Heart left ventricle (tissue), 16 donors: ENCODE measurements at regions of chr2 and their contacts with region 1.

Region 1: DNA sequence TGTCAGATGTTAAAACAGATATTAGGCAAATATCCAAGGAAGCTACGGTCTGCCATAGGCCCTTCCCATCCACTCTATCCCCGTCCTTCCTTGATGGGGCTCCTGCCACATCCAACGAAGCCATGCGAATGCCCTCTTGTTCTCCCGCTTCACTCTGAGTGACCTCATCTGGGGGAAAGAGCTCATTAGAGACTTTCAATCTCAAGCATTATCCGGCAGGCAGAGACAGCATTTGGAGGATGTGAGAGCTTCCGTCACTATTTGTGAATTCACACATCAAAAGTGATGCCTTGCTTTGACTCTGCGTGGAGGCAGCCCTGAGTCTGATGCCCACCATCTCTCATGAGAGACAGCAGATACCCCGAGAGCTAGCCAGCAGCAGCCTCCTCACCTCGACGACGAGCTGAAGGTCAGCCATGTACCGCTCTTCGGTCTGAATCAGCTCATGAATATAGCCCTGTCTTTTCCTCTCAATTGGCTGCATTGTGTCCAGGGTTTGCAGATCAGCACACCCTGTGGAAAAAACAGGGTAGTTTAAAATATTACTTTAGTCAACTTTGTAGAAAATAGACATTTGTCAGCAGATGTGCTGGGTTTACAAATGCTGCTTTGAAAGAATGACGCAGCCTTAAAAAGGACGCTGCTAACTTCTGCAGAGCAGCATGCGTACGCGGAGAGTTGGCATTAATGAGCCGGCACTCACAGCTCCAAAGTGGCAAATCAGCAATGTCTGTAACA is 45.9 kb downstream of the FAM228A start:
- DNase-seq: no peak
- ATAC-seq: no peak
- H3K4me3 ChIP-seq: no peak overlapping the region
- H3K27ac ChIP-seq: no peak overlapping the region
- H3K4me1 ChIP-seq: no peaks in the 10 kb centered on the region
- H3K27me3 ChIP-seq: no peaks in the 10 kb centered on the region
- CTCF ChIP-seq: no peak
- POLR2A ChIP-seq: no peak

Region 2: DNA sequence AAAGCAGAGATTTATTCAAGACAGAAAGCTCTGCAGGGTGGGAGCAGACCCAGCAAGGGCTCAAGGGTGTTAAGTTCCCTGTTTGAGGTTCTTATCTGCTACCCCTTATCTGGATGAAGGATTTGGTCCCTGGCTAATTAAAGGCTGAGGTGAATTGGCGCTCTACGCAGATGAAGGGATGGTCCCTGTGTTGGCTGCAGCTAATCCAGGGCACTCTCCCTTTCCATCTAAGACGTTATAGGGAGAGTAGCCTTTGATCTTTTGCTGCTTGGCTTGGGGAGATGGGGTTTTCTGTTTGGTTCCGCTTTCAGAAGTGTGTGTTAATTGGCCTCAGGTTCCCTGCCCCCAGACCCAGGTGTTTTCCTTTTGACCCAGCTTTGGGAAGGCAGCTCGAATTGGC is 28.9 kb before region 1 on chr2:
- intact Hi-C with region 1: no loop called
- DNase-seq: no peak
- ATAC-seq: no peak
- H3K4me3 ChIP-seq: no peak overlapping the region
- H3K27ac ChIP-seq: no peak overlapping the region
- H3K4me1 ChIP-seq: no peaks in the 10 kb centered on the region
- H3K27me3 ChIP-seq: no peaks in the 10 kb centered on the region
- CTCF ChIP-seq: no peak
- POLR2A ChIP-seq: no peak

Region 3: GRCh38 chr2:24754985-24755705 is 534.4 kb after region 1 on chr2:
- intact Hi-C with region 1: loop called in 1 of 10 experiments (anchors 5 kb)
- DNase-seq: no peak
- ATAC-seq: no peak
- H3K4me3 ChIP-seq: no peak overlapping the region
- H3K27ac ChIP-seq: no peak overlapping the region
- H3K4me1 ChIP-seq: no peaks in the 10 kb centered on the region
- H3K27me3 ChIP-seq: no peaks in the 10 kb centered on the region
- CTCF ChIP-seq: no peak
- POLR2A ChIP-seq: no peak

Region 4: DNA sequence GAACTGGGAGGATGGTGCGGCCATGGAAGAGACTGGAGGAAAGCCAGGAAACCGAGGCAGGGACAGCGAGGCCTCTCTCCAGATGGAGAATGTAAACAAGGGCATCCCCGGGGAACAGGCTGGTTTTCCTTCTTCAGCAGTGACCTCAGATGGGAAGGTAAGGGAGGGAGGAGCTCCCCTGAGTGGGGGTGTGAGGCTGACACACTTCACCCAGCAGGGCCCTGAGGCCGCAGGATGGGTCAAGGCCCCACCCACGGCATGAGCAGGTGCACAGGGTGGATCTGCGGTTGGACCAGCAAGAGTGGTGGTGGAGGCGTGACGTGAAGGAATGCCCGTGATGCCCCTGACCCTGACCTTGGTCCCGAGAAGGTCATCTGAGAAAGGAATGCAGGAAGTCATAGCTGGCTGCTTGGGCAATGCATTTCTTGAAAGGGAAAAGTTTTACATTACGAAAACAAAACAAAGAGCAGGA is 651.2 kb after region 1 on chr2:
- intact Hi-C with region 1: no loop called
- DNase-seq: peak in 2 of 5 donors; percentile 43 to 66
- ATAC-seq: peak in 3 of 4 donors; percentile 30 to 59 (median 41)
- H3K4me3 ChIP-seq: no peak overlapping the region
- H3K27ac ChIP-seq: peak overlapping the region in 10 of 12 donors; percentile 10 to 81 (median 48)
- H3K4me1 ChIP-seq: peaks cover 0 to 37% (median 10%) of the 10 kb centered on the region in 12 donors
- H3K27me3 ChIP-seq: no peaks in the 10 kb centered on the region
- CTCF ChIP-seq: no peak
- POLR2A ChIP-seq: no peak